ENCODE measurements at regions of chr10 and their contacts with region 1.

Region 1: GRCh38 chr10:99444383-99445045 is 14.1 kb upstream of the GOT1 start:
- DNase-seq: no peak
- H3K4me3 ChIP-seq: no peak overlapping the region
- H3K27ac ChIP-seq: no peak overlapping the region
- H3K4me1 ChIP-seq: no peaks in the 10 kb centered on the region
- H3K27me3 ChIP-seq: no peaks in the 10 kb centered on the region
- CTCF ChIP-seq: no peak

Region 2: GRCh38 chr10:99370993-99371392 is 73.5 kb before region 1 on chr10:
- CTCF ChIA-PET with region 1: no interaction called
- dilution Hi-C with region 1: no loop called
- in situ Hi-C with region 1: no loop called
- intact Hi-C with region 1: no loop called
- DNase-seq: peak; percentile 25
- H3K4me3 ChIP-seq: no peak overlapping the region
- H3K27ac ChIP-seq: no peak overlapping the region
- H3K4me1 ChIP-seq: no peaks in the 10 kb centered on the region
- H3K27me3 ChIP-seq: no peaks in the 10 kb centered on the region
- CTCF ChIP-seq: peak; percentile 46 to 64

Region 3: DNA sequence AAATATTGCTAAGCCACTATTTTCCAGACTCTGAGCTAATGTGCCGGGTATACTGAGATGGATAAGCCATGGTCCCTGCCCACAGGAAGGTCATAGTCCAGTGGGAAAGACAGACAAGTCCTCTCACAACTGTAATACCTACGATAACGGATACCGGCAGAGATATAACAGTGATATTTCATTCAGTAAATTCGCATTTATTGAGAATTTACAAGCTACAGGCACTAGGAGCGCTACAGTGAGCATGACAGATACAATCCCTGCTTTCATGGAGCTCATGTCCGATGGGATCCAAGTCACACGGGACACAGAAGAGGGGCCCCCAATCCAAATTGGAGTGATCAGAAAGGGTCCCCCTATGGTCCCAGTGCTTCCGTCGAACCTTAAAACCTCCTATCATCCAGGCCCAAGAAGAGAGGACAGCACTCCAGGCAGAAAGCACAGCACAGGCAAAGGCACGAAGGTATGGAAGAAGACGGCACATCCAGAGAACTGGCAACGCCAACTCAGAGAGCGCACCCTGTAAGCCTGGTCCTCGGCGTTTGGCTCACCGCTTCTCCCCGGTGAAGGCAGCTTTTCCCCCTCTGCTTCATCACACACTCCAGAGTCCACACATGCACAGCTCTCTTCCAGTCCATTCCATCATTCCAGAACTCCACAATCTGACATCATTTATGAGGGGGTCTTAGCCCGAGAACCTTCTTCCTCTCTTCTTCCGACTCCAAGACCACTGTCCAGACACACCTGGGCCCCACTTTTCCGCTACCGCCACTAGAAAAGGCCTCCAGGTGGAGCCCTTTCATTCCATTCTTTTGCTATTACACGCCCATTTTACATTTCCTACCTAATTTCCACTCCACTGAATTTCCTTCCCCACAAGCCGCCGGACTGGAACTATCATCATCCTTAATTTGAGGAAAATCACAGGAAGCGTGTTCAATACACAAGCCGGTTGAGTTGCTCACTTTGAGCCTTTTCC is 40.4 kb after region 1 on chr10:
- CTCF ChIA-PET with region 1: no interaction called
- dilution Hi-C with region 1: loop called (anchors 5 kb)
- in situ Hi-C with region 1: no loop called
- intact Hi-C with region 1: no loop called
- DNase-seq: peak; percentile 2
- H3K4me3 ChIP-seq: no peak overlapping the region
- H3K27ac ChIP-seq: no peak overlapping the region
- H3K4me1 ChIP-seq: no peaks in the 10 kb centered on the region
- H3K27me3 ChIP-seq: peaks cover 7% of the 10 kb centered on the region
- CTCF ChIP-seq: peak; percentile 30 to 45

Region 4: DNA sequence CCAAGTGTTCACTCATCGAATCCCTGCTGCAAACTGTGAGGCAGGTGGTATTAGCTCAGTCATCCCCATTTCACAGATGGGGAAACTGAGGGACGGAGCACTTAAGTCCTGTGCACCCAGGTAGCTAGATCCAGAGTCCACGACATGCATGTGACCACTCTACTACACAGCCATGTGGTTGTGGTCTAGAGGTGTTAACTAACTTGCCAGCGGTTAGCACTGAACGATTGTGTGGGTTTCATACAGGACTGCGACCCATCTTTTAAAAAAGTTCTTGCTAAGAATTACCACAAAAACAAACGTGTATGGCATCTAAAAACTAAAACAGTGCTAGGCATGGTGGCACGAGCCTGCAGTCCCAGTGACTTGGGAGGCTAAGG is 321.8 kb after region 1 on chr10:
- CTCF ChIA-PET with region 1: no interaction called
- dilution Hi-C with region 1: no loop called
- in situ Hi-C with region 1: no loop called
- intact Hi-C with region 1: no loop called
- DNase-seq: no peak
- H3K4me3 ChIP-seq: no peak overlapping the region
- H3K27ac ChIP-seq: no peak overlapping the region
- H3K4me1 ChIP-seq: no peaks in the 10 kb centered on the region
- H3K27me3 ChIP-seq: no peaks in the 10 kb centered on the region
- CTCF ChIP-seq: no peak